Mammary epithelial cell (primary cell): ENCODE measurements at regions of chr10 and their contacts with region 1.

Region 1: DNA sequence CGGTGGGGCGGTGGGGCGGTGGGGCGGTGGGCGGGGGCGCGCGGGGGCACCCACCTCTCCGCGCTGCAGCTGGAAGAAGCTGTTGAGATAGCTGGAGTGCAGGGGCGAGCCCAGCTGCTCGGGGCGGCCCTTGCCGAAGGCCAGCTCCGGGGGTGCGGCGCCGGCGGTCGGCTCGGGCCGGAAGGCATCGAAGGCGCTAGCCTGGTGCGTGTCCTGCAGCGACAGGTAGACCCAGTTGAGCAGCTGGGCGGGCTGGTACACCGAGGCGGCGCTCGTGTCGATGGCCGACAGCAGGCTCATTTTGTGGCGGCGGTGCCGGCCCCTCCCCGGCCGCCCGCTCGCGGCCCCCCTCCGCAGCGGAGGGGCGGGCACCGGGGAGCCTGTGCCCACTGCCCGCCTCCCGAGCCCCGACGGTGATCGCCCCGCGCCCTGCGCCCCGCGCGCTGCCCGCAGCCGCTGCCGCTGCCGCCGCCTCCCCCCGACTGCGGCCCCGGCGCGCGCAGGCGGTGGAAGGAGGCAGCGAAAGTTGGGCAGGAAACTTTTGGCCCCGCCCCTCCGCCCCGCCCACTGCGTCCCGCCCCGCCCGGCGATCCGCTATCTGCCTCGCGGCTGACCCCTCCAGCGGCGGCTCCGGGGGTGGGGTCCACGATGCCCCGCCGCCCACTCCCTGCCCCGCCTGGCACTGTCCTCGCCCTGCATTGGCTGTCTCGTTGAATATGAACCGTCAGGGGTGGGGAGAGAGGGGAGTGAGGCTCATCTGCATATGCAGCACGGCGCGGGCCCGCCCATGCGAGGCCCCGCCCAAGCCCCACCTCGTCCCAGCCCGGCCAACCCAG is at the start of gene ZCCHC24:
- DNase-seq: peak; percentile 98
- H3K4me3 ChIP-seq: peak within 1 kb of the TSS; percentile 50 to 60 (median 60)
- H3K27ac ChIP-seq: peak within 1 kb of the TSS; percentile 11
- H3K4me1 ChIP-seq: peaks cover 36% of the 10 kb centered on the region
- H3K27me3 ChIP-seq: no peaks in the 10 kb centered on the region
- CTCF ChIP-seq: no peak
- total RNA-seq, gene ZCCHC24: 3.1 to 7.3 TPM

Region 2: DNA sequence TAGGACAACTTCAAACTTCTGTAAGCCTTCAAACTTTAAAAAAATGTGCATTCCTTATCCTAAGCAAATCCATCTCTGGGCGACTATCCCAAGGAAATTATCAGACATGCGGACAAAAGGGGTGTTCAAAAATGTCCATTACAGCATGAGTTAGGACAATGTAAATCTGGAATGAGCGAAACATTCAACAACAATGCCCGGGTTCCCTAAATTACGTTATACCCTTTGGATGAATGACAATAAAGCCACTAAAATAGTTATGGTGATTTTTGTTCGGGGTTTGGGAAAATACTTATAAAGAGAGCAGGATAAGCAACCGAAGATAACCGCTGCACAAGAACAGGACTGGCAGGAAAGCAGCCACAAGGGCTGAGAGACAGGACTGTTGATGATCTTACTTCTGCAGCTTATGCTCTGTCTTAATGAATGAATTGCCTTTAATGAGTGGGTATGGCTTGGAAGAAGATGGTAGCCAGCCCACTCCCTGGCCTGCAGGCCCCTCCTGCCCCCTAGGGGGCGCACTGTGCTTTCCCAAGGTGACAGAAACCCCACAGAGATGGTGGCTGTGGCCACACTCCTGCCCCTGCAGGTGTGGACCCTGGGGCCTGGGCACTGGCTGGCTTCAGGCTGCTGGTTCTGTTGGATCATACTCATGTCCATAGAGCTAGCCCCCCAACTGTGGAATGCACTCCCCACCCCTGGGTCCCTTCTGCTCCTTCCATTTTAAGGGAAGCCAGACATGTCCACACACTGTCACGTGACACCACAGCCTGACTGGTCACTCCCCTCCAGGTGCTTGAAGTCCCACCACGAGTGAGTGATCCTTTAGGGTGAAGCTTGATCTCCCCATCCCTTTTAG is 45.0 kb before region 1 on chr10:
- CTCF ChIA-PET with region 1: no interaction called
- dilution Hi-C with region 1: no loop called
- in situ Hi-C with region 1: no loop called
- intact Hi-C with region 1: loop called (anchors 5 kb)
- DNase-seq: no peak
- H3K4me3 ChIP-seq: no peak overlapping the region
- H3K27ac ChIP-seq: no peak overlapping the region
- H3K4me1 ChIP-seq: peaks cover 28% of the 10 kb centered on the region
- H3K27me3 ChIP-seq: no peaks in the 10 kb centered on the region
- CTCF ChIP-seq: peak; percentile 70 to 78

Region 3: DNA sequence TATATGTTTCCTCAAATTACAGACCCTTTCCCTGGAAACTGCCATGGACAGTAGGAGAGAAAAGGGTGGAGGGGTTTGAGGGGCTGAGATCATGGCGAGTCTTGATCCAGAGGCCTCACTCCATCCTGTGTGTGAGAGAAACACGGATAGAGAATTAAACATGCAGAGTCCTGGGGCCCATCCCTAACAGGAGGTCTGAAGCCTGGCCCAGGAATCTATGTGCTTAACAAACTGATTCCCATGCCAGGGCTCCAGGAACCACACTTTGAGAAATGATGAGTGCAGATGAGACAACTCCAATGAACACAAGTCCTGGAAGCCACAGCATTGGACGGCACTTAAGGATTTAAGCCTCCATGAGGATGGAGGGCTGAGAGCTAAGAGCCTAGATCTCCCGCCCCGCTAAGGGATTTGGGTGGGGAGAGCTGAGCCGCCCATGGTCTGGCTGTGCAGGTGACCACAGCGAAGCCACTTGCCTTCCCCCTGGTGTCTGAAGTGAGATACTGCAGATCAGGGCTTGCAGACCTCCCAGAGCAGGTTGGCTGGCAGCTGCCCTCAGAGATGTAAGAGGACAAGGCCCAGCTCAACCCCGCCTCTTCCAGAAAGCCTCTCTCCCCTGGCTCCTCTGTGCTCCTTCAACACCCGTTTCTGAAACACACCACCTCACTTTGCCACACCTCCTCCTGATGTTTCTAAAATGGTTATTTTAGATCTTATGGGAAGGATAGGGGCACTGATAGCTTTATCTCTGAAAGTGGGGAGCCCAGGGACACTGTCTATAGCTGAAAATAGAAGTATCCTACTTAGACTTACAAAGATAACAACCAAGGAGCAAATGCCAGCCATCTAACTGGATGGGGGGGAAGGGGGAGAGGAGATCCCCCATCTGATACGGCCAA is 42.2 kb after region 1 on chr10:
- CTCF ChIA-PET with region 1: no interaction called
- dilution Hi-C with region 1: no loop called
- in situ Hi-C with region 1: no loop called
- intact Hi-C with region 1: loop called (anchors 2 kb)
- DNase-seq: peak; percentile 23
- H3K4me3 ChIP-seq: no peak overlapping the region
- H3K27ac ChIP-seq: peak overlapping the region; percentile 17
- H3K4me1 ChIP-seq: peaks cover 22% of the 10 kb centered on the region
- H3K27me3 ChIP-seq: no peaks in the 10 kb centered on the region
- CTCF ChIP-seq: peak; percentile 43 to 51